ENCODE measurements at regions of chr12 and their contacts with region 1.

Region 1: GRCh38 chr12:132194056-132194455 is 49.8 kb downstream of the NOC4L start:
- DNase-seq: no peak
- H3K4me3 ChIP-seq: no peak overlapping the region
- H3K27ac ChIP-seq: no peak overlapping the region
- H3K4me1 ChIP-seq: no peaks in the 10 kb centered on the region
- H3K27me3 ChIP-seq: peaks cover 100% of the 10 kb centered on the region
- CTCF ChIP-seq: peak; percentile 57

Region 2: GRCh38 chr12:131912518-131913294 is 281.4 kb before region 1 on chr12:
- CTCF ChIA-PET with region 1: no interaction called
- POLR2A ChIA-PET with region 1: no interaction called
- intact Hi-C with region 1: no loop called
- DNase-seq: peak in 1 of 2 experiments; percentile 74
- H3K4me3 ChIP-seq: no peak overlapping the region
- H3K27ac ChIP-seq: no peak overlapping the region
- H3K4me1 ChIP-seq: no peaks in the 10 kb centered on the region
- H3K27me3 ChIP-seq: no peaks in the 10 kb centered on the region
- CTCF ChIP-seq: no peak; the same call in 1 of the 2 replicates

Region 3: GRCh38 chr12:132133952-132134625 is 60.0 kb before region 1 on chr12:
- CTCF ChIA-PET with region 1: no interaction called
- POLR2A ChIA-PET with region 1: no interaction called
- intact Hi-C with region 1: no loop called
- DNase-seq: no peak
- H3K4me3 ChIP-seq: no peak overlapping the region
- H3K27ac ChIP-seq: no peak overlapping the region
- H3K4me1 ChIP-seq: no peaks in the 10 kb centered on the region
- H3K27me3 ChIP-seq: no peaks in the 10 kb centered on the region
- CTCF ChIP-seq: no peak

Region 4: GRCh38 chr12:132213359-132214160 is 19.5 kb after region 1 on chr12:
- CTCF ChIA-PET with region 1: interaction called, 11 read pairs
- POLR2A ChIA-PET with region 1: no interaction called
- intact Hi-C with region 1: no loop called
- DNase-seq: no peak
- H3K4me3 ChIP-seq: no peak overlapping the region
- H3K27ac ChIP-seq: no peak overlapping the region
- H3K4me1 ChIP-seq: no peaks in the 10 kb centered on the region
- H3K27me3 ChIP-seq: peaks cover 77% of the 10 kb centered on the region
- CTCF ChIP-seq: no peak

Measured in PC-9 (cell line).